PC-3 (cell line): ENCODE measurements at regions of chr2 and their contacts with region 1.

Region 1: GRCh38 chr2:233915128-233915527 is 2.0 kb upstream of the TRPM8 start:
- DNase-seq: peak; percentile 47
- ATAC-seq: 0 out of 2 replicates have a peak, but pooled peaks have one; percentile 48
- H3K4me3 ChIP-seq: no peak overlapping the region
- H3K27ac ChIP-seq: no peak overlapping the region
- H3K4me1 ChIP-seq: peaks cover 4% of the 10 kb centered on the region
- H3K27me3 ChIP-seq: peaks cover 23% of the 10 kb centered on the region; the same call in 1 of the 2 replicates
- CTCF ChIP-seq: peak; percentile 58

Region 2: GRCh38 chr2:233100192-233100998 is 814.7 kb before region 1 on chr2:
- CTCF ChIA-PET with region 1: interaction called, 10 read pairs
- POLR2A ChIA-PET with region 1: no interaction called
- intact Hi-C with region 1: no loop called
- DNase-seq: no peak
- ATAC-seq: no peak
- H3K4me3 ChIP-seq: no peak overlapping the region
- H3K27ac ChIP-seq: no peak overlapping the region
- H3K4me1 ChIP-seq: no peaks in the 10 kb centered on the region
- H3K27me3 ChIP-seq: no peaks in the 10 kb centered on the region
- CTCF ChIP-seq: no peak

Region 3: DNA sequence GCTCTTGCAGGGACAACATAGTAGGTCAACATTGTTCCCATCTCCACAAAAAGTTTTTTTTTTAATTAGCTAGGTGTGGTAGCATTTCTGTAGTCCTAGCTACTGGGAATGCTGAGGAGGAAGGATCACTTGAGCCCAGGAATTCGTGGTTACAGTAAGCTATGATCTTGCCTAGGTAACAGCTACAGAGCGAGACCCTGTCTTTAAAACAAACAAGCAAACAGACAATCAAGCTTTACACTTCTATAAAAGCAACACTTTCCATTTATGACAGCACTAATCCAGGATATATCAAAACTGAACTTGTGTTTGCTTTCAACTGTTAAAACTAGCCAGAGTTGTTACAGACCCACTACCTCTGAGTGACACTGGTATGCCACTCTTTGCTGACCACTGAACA is 174.3 kb before region 1 on chr2:
- CTCF ChIA-PET with region 1: no interaction called
- POLR2A ChIA-PET with region 1: no interaction called
- intact Hi-C with region 1: no loop called
- DNase-seq: no peak
- ATAC-seq: no peak
- H3K4me3 ChIP-seq: no peak overlapping the region
- H3K27ac ChIP-seq: no peak overlapping the region
- H3K4me1 ChIP-seq: no peaks in the 10 kb centered on the region
- H3K27me3 ChIP-seq: no peaks in the 10 kb centered on the region
- CTCF ChIP-seq: no peak

Region 4: GRCh38 chr2:234437642-234438304 is 522.6 kb after region 1 on chr2:
- CTCF ChIA-PET with region 1: no interaction called
- POLR2A ChIA-PET with region 1: no interaction called
- intact Hi-C with region 1: no loop called
- DNase-seq: no peak
- ATAC-seq: no peak
- H3K4me3 ChIP-seq: no peak overlapping the region
- H3K27ac ChIP-seq: no peak overlapping the region
- H3K4me1 ChIP-seq: no peaks in the 10 kb centered on the region
- H3K27me3 ChIP-seq: no peaks in the 10 kb centered on the region
- CTCF ChIP-seq: no peak